Posterior vena cava (tissue), 2 donors: ENCODE measurements at regions of chr14 and their contacts with region 1.

Region 1: GRCh38 chr14:49485290-49485689 is 100.9 kb downstream of the RPS29 start:
- DNase-seq: no peak

Region 2: GRCh38 chr14:48970803-48971394 is 514.4 kb before region 1 on chr14:
- intact Hi-C with region 1: loop called in 1 of 2 experiments (anchors 5 kb)
- DNase-seq: no peak